ENCODE measurements at regions of chr1 and their contacts with region 1.

Region 1: GRCh38 chr1:159826441-159827101 is at the start of gene SLAMF8:
- DNase-seq: peak; percentile 61
- H3K4me3 Mint-ChIP-seq: peak within 1 kb of the TSS; percentile 67
- H3K27ac Mint-ChIP-seq: peak within 1 kb of the TSS; percentile 69
- H3K4me1 Mint-ChIP-seq: peaks cover 54% of the 10 kb centered on the region
- H3K27me3 Mint-ChIP-seq: peaks cover 45% of the 10 kb centered on the region
- total RNA-seq, gene SLAMF8: 0.49 and 0.69 TPM in 2 replicates

Region 2: DNA sequence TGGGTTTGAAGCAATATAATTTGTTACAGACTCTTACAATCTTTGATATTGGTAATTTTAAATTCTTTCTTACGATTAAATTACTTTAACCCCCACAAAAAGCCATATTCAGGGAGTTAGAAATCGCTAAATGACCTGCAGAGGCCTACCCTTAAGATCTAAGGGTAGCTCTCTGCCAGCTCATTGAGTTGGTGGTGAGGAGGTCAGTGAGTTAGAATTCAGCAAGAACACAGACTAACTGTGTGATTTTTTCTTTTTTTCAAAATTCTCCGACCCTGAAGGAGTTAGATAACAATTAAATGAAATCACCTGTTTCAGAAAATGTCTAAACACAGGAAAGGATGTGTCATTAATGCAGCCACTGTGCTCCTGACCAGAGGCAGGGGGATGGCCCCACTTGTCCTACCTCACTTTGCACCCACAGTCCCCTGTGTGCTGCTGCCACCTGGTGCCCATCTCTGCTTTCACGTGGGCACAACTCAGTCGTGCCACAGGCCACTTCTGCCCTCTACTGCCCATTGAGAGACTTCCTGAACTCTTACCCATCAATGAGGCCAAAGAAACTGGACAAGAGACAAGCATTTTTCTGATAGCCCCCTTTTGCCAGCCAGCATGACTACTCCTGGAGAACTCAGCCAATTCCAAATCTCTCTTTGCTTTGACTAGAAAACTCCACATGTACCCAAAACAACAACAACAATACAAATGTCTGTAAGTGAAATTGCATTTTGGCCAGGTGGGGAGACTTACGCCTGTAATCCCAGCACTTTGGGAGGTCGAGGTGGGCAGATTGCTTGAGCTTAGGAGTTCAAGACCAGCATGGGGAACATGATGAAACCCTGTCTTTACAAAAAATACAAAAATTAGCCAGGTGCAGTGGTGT is 64.9 kb after region 1 on chr1:
- intact Hi-C with region 1: loop called (anchors 2 kb)
- DNase-seq: peak; percentile 64
- H3K4me3 Mint-ChIP-seq: no peak overlapping the region
- H3K27ac Mint-ChIP-seq: no peak overlapping the region
- H3K4me1 Mint-ChIP-seq: peaks cover 12% of the 10 kb centered on the region
- H3K27me3 Mint-ChIP-seq: peaks cover 17% of the 10 kb centered on the region

Region 3: GRCh38 chr1:159924981-159925712 is 98.6 kb after region 1 on chr1 and contains the start of gene TAGLN2:
- intact Hi-C with region 1: loop called (anchors 1 kb)
- DNase-seq: peak; percentile 92
- H3K4me3 Mint-ChIP-seq: peak within 1 kb of the TSS; percentile 94
- H3K27ac Mint-ChIP-seq: peak within 1 kb of the TSS; percentile 99
- H3K4me1 Mint-ChIP-seq: peaks cover 57% of the 10 kb centered on the region
- H3K27me3 Mint-ChIP-seq: peaks cover 1% of the 10 kb centered on the region
- total RNA-seq, gene TAGLN2: 442 and 461 TPM in 2 replicates

Measured in activated T-helper 1 cell treated with anti-CD3 and anti-CD28 coated beads, Interleukin-12 subunit alpha, Interleukin-12 subunit beta, Interleukin-2, Interleukin-4 antibody, amounts not matched to agents 30 ng/mL and 10 ng/mL and 1 ng/mL, durations not matched to agents 14 hours and 24 hours and 36 hours (primary cell).